Panc1 (cell line): ENCODE measurements at regions of chr14 and their contacts with region 1.

Region 1: DNA sequence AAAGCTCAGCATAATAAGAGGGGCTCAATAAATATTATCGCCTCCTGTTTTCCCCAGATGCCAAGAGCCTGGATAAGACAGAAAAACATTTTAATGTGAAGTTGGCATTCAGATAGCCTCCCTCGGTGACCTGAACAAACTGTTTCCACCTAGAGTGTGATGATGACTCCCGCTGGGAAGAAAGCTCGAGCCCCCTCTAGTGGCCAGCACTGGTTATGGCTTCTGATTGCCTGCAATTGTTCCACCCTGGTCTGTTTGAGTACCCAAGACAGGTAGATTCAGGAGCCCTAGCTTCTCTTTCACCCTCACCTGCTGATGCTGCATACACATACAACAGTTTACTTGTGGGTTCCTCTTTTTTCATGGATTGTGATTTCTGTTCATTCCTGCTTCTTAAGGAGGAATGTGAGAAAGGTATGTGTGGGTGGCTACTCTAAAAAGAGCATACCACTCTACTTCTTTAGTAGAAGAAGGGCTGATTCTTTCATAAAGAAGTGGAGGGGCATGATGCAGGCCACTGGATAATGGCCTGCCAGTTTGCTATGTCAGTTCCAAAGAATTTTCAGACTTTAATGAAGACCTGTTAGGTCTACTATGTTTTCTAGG is 6.4 kb downstream of the ERG28 start:
- DNase-seq: peak; percentile 71
- ATAC-seq: peak; percentile 92
- H3K4me3 ChIP-seq: no peak overlapping the region
- H3K27ac ChIP-seq: 0 out of 2 replicates have a peak overlapping the region, but pooled peaks have one; percentile 25
- H3K4me1 ChIP-seq: peaks cover 4% of the 10 kb centered on the region
- H3K27me3 ChIP-seq: no peaks in the 10 kb centered on the region
- CTCF ChIP-seq: peak; percentile 91

Region 2: DNA sequence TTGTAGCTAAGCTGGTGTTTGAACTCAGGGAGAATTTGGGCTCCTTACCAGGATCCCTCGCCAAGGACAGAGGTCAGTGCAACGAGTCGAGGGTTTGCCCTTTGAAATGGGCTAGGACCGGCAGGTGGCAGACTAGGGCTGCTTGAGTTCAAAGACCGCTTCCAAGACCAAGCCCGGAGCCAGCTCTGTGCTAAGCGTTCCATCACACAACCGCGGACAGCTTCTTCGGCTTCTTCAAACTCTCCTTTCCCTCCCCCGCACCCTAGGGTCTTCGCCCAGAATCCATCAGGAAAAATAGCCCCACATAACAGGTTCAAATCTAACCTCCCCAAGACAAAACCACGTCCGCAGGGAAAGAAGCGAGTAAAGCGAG is 76.5 kb before region 1 on chr14:
- CTCF ChIA-PET with region 1: interaction called, 22 read pairs
- POLR2A ChIA-PET with region 1: interaction called, 3 read pairs
- in situ Hi-C with region 1: no loop called
- intact Hi-C with region 1: loop called (anchors 2 kb)
- DNase-seq: peak; percentile 76
- ATAC-seq: peak; percentile 89
- H3K4me3 ChIP-seq: peak overlapping the region; percentile 58 to 85
- H3K27ac ChIP-seq: peak overlapping the region; percentile 42
- H3K4me1 ChIP-seq: peaks cover 5% of the 10 kb centered on the region; the same call in 1 of the 2 replicates
- H3K27me3 ChIP-seq: no peaks in the 10 kb centered on the region
- CTCF ChIP-seq: peak; percentile 81

Region 3: GRCh38 chr14:75604856-75605851 is 49.1 kb before region 1 on chr14:
- CTCF ChIA-PET with region 1: no interaction called
- POLR2A ChIA-PET with region 1: interaction called, 16 read pairs
- in situ Hi-C with region 1: no loop called
- intact Hi-C with region 1: no loop called
- DNase-seq: no peak
- ATAC-seq: peak; percentile 67
- H3K4me3 ChIP-seq: no peak overlapping the region
- H3K27ac ChIP-seq: peak overlapping the region; percentile 17; the same call in 1 of the 2 replicates
- H3K4me1 ChIP-seq: peaks cover 4% of the 10 kb centered on the region
- H3K27me3 ChIP-seq: no peaks in the 10 kb centered on the region
- CTCF ChIP-seq: no peak